ENCODE measurements at regions of chr2 and their contacts with region 1.

Region 1: DNA sequence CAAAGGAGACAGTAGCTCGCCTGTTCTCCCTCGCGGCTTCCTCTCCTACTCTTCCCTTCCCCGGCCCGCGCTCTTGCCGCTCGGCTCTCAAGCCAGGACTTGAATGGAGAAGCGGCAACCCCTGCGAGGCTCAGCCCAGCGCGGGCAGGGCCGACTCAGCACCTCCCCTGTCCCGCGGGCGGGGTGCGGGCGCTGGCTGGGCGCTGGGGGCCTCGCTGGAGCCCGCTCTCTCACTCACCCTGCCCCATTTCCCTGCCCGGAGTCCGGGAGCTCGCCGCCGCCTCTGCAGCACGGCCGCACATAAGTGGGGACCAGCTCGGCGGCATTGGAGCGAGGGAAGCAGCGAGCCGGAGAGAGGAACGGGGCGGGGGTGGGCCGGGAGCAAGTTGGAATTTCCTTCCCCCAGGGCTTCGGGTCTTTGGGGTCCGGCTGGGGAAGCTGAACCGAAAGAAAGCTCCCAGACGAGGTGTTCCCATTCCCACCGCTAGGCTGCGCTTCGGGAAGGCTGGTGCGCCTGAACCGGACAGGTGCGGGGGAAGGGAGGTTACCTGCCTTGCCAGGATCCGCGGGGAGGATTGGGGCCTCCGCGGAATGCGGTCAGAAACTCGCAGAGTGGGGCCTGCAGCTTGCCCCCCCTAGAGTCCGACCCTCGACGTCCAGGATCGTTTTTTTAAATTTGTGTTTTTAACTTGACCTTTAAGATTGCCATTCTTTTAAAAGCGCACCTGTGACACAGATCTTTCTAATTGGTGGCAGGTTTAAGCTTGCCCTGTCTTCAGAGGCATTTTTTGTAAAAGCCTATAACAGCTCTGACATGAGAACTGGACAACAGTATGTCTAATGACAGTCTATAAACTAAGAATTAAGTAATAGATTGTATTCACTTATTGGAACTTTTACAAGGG is at the start of gene COBLL1:
- DNase-seq: peak; percentile 77 to 89 (median 84)
- ATAC-seq: peak; percentile 65 to 86 (median 82)
- H3K4me3 ChIP-seq: peak within 1 kb of the TSS; percentile 69 to 89 (median 84)
- H3K27ac ChIP-seq: peak within 1 kb of the TSS; percentile 89 to 97 (median 96)
- H3K4me1 ChIP-seq: peaks cover 0 to 31% (median 15%) of the 10 kb centered on the region in 12 donors
- H3K27me3 ChIP-seq: peaks cover 0 to 4% (median 0%) of the 10 kb centered on the region in 9 donors
- CTCF ChIP-seq: peak; percentile 73 to 90 (median 84)
- POLR2A ChIP-seq: no peak
- total RNA-seq, gene COBLL1: 11.0 to 36.9 (median 18.8) TPM

Region 2: DNA sequence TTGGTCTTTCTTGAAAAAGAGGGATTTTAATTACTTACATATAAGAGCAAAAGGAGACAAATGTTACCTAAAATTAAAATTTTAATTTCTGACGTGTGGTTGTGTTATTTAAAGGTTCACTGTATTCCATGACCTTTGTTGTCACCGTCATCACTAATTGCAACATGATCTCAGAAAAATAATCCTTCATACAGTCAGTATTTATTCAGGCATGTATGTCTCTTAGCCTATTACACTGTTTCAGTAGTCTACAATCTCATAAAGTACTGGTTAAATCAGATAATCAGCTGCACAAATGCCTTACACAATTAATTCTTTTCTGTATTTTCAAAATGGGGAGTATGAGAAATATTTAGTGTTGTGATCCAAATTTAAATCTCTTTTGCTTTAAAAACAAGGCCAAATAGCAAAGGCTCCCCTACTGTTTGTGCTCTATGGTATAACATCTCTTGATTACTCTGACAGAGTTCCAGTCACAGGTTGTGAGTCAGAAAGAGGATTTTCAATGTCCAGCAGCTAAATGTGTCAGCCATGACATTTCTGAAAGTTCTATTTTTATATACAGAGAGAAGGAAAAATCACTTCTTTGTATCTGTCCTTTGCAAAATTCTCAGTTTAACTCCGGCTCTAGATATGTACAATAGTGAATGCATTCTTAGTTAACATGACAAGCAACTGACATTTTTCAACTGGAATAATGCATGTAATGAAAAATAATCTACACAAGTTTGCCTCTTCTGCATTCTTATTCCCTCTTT is 1290.2 kb before region 1 on chr2:
- intact Hi-C with region 1: no loop called
- DNase-seq: no peak
- ATAC-seq: no peak
- H3K4me3 ChIP-seq: no peak overlapping the region
- H3K27ac ChIP-seq: no peak overlapping the region
- H3K4me1 ChIP-seq: peaks cover 0 to 7% (median 0%) of the 10 kb centered on the region in 12 donors
- H3K27me3 ChIP-seq: no peaks in the 10 kb centered on the region
- CTCF ChIP-seq: no peak
- POLR2A ChIP-seq: no peak

Region 3: DNA sequence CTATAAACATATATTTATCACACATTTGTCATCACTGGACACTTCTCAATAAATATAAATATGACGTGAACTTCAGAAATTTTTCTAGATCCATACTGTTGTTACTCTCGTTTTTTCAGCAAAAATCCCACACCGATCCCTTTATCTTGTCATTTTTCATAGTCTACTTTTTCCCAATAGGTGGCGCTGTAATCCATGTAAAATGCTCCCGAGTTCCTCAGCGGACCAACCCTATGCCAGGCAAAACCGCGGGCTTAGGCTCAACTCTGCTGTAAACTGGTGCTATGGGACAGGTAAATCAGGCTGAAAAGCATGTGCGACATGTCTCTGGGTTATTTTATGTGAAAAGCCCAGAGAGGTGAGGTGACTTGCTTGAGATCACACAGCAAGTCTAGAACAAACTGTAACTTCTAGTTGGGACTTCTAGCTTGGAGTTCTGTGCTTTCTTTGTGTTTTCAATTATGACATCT is 104.3 kb before region 1 on chr2:
- intact Hi-C with region 1: loop called in 9 of 10 experiments (anchors 2 to 5 kb)
- DNase-seq: peak; percentile 40 to 67 (median 56)
- ATAC-seq: peak; percentile 43 to 85 (median 81)
- H3K4me3 ChIP-seq: no peak overlapping the region
- H3K27ac ChIP-seq: no peak overlapping the region
- H3K4me1 ChIP-seq: peaks cover 0 to 50% (median 21%) of the 10 kb centered on the region in 12 donors
- H3K27me3 ChIP-seq: no peaks in the 10 kb centered on the region
- CTCF ChIP-seq: peak; percentile 55 to 82 (median 72)
- POLR2A ChIP-seq: no peak

Region 4: GRCh38 chr2:164782323-164782722 is 59.6 kb before region 1 on chr2:
- intact Hi-C with region 1: loop called in 7 of 10 experiments (anchors 2 to 10 kb)
- DNase-seq: no peak
- ATAC-seq: peak in 3 of 4 donors; percentile 55 to 88 (median 84)
- H3K4me3 ChIP-seq: no peak overlapping the region
- H3K27ac ChIP-seq: peak overlapping the region in 11 of 12 donors; percentile 1 to 79 (median 75)
- H3K4me1 ChIP-seq: peaks cover 2 to 97% (median 65%) of the 10 kb centered on the region in 12 donors
- H3K27me3 ChIP-seq: no peaks in the 10 kb centered on the region
- CTCF ChIP-seq: no peak
- POLR2A ChIP-seq: no peak

Region 5: GRCh38 chr2:164910101-164910899 is 68.3 kb after region 1 on chr2:
- intact Hi-C with region 1: loop called (anchors 2 to 5 kb)
- DNase-seq: no peak
- ATAC-seq: peak in 3 of 4 donors; percentile 46 to 62 (median 50)
- H3K4me3 ChIP-seq: peak overlapping the region in 1 of 12 donors; percentile 11
- H3K27ac ChIP-seq: peak overlapping the region in 5 of 12 donors; percentile 4 to 57 (median 32)
- H3K4me1 ChIP-seq: peaks cover 0 to 49% (median 13%) of the 10 kb centered on the region in 12 donors
- H3K27me3 ChIP-seq: no peaks in the 10 kb centered on the region
- CTCF ChIP-seq: no peak
- POLR2A ChIP-seq: no peak

Region 6: GRCh38 chr2:164967781-164968228 is 125.8 kb after region 1 on chr2:
- intact Hi-C with region 1: no loop called
- DNase-seq: no peak
- ATAC-seq: no peak
- H3K4me3 ChIP-seq: no peak overlapping the region
- H3K27ac ChIP-seq: no peak overlapping the region
- H3K4me1 ChIP-seq: no peaks in the 10 kb centered on the region
- H3K27me3 ChIP-seq: no peaks in the 10 kb centered on the region
- CTCF ChIP-seq: no peak
- POLR2A ChIP-seq: no peak